ENCODE measurements at regions of chr11 and their contacts with region 1.

Region 1: DNA sequence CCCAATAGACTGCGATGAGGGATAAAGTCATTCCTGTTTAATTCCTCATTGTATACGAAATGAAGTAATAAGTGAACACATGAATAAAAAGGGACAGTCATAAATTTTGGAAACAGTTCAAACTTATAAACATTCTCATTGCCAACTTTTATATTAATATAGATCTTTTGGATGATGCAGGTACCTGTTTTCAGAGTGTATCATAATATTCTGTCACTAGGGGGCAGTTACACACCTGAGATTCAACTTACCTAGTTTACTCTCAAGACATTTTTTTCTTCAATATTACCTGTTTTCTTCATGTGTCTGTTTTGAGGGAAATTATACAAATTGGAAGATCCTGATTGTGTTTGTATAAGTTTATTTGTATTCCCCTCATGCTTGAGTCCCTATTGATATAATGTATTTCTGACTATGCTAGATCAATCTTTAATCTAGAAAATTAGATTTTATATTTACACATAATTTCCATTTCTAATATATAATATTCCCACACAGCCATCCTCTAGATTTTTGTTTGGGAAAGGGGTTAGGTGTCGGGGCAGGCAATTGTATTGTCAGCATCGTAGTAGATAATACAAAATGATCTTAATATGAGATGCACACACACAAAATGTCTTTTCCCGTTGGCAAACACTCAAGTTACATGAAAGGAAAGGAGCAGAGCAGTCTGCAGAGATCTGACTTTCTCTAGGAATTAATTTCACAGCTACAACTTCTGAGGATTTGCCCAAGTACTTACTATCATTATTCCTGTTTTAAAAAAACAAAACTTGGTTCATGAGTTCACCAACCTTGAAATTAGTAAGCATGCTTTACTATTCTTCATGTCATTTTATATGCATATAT is 18.4 kb downstream of the FDX1 start:
- DNase-seq: no peak
- H3K4me3 ChIP-seq: no peak overlapping the region
- H3K27ac ChIP-seq: no peak overlapping the region
- H3K4me1 ChIP-seq: peaks cover 0 to 10% (median 0%) of the 10 kb centered on the region in 3 donors
- H3K27me3 ChIP-seq: no peaks in the 10 kb centered on the region
- CTCF ChIP-seq: peak; percentile 16 to 66 (median 42)
- POLR2A ChIP-seq: no peak

Region 2: GRCh38 chr11:109597336-109597735 is 850.8 kb before region 1 on chr11:
- intact Hi-C with region 1: no loop called
- DNase-seq: no peak
- H3K4me3 ChIP-seq: no peak overlapping the region
- H3K27ac ChIP-seq: no peak overlapping the region
- H3K4me1 ChIP-seq: no peaks in the 10 kb centered on the region
- H3K27me3 ChIP-seq: no peaks in the 10 kb centered on the region
- CTCF ChIP-seq: no peak
- POLR2A ChIP-seq: no peak

Region 3: DNA sequence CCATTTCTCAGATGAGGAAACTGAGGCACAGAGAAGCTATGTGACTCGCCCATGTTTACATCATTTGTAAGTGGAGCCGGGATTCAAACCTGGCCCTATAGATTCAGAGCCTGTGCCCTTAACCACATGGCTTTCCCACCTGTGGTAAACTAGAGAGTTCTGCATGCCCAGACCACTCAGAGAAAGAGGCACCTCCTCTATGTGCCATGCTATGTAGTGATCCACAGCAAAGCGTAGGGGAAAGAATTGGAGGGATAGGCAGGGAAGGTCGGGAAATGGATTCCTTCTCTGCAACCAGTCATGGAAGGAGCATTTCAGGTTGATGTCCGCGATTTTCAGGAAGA is 782.0 kb after region 1 on chr11:
- intact Hi-C with region 1: loop called (anchors 10 kb)
- DNase-seq: no peak
- H3K4me3 ChIP-seq: peak overlapping the region; percentile 43 to 68 (median 50)
- H3K27ac ChIP-seq: peak overlapping the region; percentile 57 to 67 (median 64)
- H3K4me1 ChIP-seq: peaks cover 0 to 13% (median 4%) of the 10 kb centered on the region in 3 donors
- H3K27me3 ChIP-seq: no peaks in the 10 kb centered on the region
- CTCF ChIP-seq: no peak
- POLR2A ChIP-seq: no peak

Measured in esophagus squamous epithelium (tissue), 5 donors.